Keratinocyte (primary cell): ENCODE measurements at regions of chr1 and their contacts with region 1.

Region 1: GRCh38 chr1:245493029-245493428 is 338.2 kb downstream of the KIF26B start:
- DNase-seq: no peak
- H3K4me3 ChIP-seq: no peak overlapping the region
- H3K27ac ChIP-seq: no peak overlapping the region
- H3K4me1 ChIP-seq: peaks cover 3% of the 10 kb centered on the region
- H3K27me3 ChIP-seq: no peaks in the 10 kb centered on the region
- CTCF ChIP-seq: peak in 1 of 3 experiments; percentile 7

Region 2: DNA sequence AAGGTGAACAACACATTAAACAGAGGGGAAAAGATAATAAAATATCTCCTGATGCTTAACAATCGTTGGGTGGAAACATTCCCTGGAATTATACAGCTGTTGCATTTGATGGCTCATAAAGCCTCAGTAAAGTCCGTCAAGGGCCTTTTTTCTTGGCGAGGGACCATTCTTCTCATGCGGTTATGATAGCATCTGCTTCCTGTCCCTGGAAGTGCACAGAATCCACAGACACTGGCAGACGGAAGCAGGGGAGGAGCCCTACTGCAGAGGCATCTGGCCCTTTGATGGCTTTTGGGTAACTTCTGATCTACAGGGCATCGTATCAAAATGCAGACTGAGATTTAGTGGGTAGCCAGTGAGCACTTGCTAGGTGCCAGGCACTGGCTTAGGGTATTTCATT is 51.3 kb before region 1 on chr1:
- dilution Hi-C with region 1: loop called (anchors 5 kb)
- DNase-seq: no peak
- H3K4me3 ChIP-seq: no peak overlapping the region
- H3K27ac ChIP-seq: no peak overlapping the region
- H3K4me1 ChIP-seq: no peaks in the 10 kb centered on the region
- H3K27me3 ChIP-seq: no peaks in the 10 kb centered on the region
- CTCF ChIP-seq: no peak

Region 3: GRCh38 chr1:245704765-245705164 is 211.7 kb after region 1 on chr1:
- dilution Hi-C with region 1: no loop called
- DNase-seq: no peak
- H3K4me3 ChIP-seq: no peak overlapping the region
- H3K27ac ChIP-seq: no peak overlapping the region
- H3K4me1 ChIP-seq: peaks cover 3% of the 10 kb centered on the region
- H3K27me3 ChIP-seq: no peaks in the 10 kb centered on the region
- CTCF ChIP-seq: no peak